ENCODE measurements at regions of chr6 and their contacts with region 1.

Region 1: DNA sequence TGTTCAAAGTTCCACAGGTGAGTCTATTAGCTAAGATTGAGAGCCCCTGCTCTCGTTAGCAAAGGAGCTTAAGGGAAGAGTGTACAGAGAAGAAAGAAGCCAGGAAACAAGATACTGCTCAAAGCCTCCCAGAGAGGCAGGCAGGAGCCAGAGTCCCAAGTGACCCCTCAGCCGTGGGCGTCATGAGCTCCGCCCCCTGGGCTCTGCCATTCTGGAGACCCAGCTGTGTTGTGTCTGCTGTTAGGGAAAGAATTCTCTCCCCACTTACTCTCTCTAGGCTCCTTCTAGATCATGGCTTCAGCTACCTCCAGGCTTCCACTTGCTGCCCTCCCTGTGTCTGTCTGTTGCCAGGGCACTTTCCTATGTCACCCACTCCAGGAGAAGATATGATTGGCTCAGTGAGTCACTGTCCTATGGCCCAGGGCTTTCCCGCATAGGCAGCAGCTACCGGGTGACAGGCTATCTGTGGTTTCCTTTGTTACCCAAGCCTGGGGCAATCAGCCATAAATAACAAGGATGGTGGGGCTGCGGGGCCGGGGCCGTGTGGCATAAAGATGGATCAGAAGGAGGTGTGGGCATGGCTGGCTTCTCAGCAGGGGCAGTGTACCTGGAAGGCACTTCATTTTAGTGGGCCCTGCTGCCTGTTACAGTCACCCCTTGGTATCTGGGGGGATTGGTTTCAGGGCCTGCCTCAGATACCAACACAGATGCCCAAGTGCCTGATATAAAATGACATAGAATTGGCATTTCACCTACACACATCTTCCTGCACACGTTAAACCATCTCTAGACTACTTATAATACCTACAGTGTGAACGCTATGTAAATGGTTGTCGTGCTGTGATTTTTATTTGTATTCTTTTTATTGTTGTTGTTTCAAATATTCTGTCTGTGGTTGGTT is 118.9 kb downstream of the ARMC2 start:
- DNase-seq: peak; percentile 52 to 53
- ATAC-seq: peak; percentile 89 to 95 (median 92)
- H3K4me3 ChIP-seq: no peak overlapping the region
- H3K4me3 Mint-ChIP-seq: peak overlapping the region; percentile 62
- H3K27ac ChIP-seq: peak overlapping the region; percentile 54
- H3K27ac Mint-ChIP-seq: peak overlapping the region; percentile 59 to 88
- H3K4me1 ChIP-seq: peaks cover 47% of the 10 kb centered on the region
- H3K4me1 Mint-ChIP-seq: peaks cover 40 to 46% of the 10 kb centered on the region in 2 donors
- H3K27me3 ChIP-seq: no peaks in the 10 kb centered on the region
- H3K27me3 Mint-ChIP-seq: no peaks in the 10 kb centered on the region
- CTCF ChIP-seq: no peak

Region 2: DNA sequence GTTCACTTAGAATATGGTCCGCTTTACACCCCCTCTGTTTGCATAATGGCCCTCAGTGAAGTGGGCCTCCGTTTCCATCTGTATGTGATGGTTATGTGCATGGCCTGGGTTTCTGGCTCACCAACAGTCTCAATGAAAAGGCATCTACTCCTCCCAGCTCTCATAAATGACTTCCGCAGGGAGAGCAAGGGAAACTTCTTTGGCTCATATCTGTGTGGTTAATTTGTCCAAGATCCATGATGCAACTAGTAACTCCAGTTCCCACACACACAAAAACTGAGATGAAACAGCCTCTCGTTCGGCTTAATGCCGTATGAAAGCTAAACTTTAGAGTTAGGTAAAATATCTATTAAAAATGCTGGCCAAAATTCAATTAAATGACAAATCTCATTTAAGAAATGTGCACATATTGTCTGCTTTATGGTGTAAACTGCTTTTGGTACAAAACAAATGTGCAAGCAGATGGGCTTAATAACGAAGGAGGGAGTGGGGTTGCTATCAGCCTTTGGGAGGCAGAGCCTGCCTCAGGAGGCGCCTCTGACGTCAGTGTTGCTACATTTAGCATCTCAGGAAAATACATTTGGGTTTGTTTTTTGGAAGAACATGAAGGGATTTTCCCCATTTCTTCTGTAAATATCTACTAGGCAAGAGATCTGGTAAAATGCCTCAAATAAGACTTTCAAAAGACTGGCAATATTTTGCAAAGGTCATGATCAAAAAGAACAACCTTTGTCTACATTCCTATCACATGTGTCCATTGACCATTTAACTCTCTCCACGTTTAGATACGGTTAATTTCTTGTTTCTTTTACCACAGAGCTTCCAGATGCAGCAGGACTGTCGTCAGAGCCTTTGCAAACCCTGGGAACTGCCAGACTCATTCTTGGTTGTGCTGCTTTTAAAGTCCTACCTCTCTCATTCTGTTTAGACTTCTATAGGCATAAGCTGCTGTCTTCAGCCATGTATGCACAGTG is 22.1 kb before region 1 on chr6:
- intact Hi-C with region 1: loop called (anchors 2 kb)
- DNase-seq: no peak
- ATAC-seq: no peak
- H3K4me3 ChIP-seq: no peak overlapping the region
- H3K4me3 Mint-ChIP-seq: no peak overlapping the region
- H3K27ac ChIP-seq: no peak overlapping the region
- H3K27ac Mint-ChIP-seq: peak overlapping the region; percentile 20 to 89
- H3K4me1 ChIP-seq: peaks cover 32% of the 10 kb centered on the region
- H3K4me1 Mint-ChIP-seq: peaks cover 38 to 41% of the 10 kb centered on the region in 2 donors
- H3K27me3 ChIP-seq: no peaks in the 10 kb centered on the region
- H3K27me3 Mint-ChIP-seq: no peaks in the 10 kb centered on the region
- CTCF ChIP-seq: no peak

Measured in natural killer cell (primary cell).